Heart right ventricle (tissue), 16 donors: ENCODE measurements at regions of chr2 and their contacts with region 1.

Region 1: DNA sequence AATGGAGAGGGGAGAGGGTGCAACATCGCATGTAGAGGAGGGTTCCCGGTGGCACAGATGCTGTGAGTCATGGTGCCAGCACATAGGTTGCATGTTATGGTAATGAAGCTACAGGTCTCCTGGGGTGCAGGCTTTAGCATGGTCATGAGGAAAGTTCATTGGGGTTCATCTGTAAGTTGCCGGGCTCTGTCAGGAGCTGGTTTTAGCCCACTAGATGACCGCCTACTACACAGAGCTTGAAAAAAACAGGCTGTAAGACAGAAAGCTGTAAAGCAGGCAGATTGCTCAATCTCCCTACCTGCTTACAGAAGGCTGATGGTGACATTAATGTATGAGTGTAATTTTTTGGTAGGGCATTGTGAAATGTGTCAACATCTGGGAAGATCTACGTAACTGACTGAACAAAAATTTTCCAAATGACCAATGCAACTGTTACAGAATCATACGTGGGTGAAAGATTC is 23.9 kb downstream of the DYSF start:
- DNase-seq: no peak
- ATAC-seq: no peak
- H3K4me3 ChIP-seq: no peak overlapping the region
- H3K27ac ChIP-seq: peak overlapping the region in 4 of 10 donors; percentile 10 to 86 (median 67)
- H3K4me1 ChIP-seq: peaks cover 3 to 58% (median 52%) of the 10 kb centered on the region in 9 donors
- H3K27me3 ChIP-seq: no peaks in the 10 kb centered on the region
- CTCF ChIP-seq: no peak

Region 2: GRCh38 chr2:71494523-71495155 is 17.4 kb after region 1 on chr2:
- intact Hi-C with region 1: loop called in 2 of 10 experiments (anchors 1 to 2 kb)
- DNase-seq: no peak
- ATAC-seq: no peak
- H3K4me3 ChIP-seq: no peak overlapping the region
- H3K27ac ChIP-seq: peak overlapping the region in 1 of 10 donors; percentile 20
- H3K4me1 ChIP-seq: peaks cover 9 to 46% (median 38%) of the 10 kb centered on the region in 9 donors
- H3K27me3 ChIP-seq: no peaks in the 10 kb centered on the region
- CTCF ChIP-seq: no peak

Region 3: DNA sequence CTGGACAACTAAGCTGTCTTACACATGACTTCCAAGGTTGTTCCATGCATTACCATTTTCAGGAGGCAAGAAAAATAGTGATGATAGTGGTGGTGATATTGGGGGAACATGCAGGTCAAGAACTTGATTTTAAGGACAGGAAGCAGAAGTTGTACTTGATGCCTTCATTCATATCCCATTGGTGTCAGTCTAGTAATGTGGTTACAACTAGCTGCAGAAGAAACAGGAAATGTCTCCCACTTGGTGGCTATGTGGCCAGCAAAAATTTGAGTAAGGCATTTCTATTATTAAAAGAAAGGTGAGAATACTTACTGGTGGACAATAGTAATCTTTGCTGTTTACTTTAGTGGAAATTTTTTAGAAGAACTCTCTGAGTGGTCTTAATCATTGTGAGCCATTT is 2011.8 kb after region 1 on chr2:
- intact Hi-C with region 1: loop called in 1 of 10 experiments (anchors 10 kb)
- DNase-seq: no peak
- ATAC-seq: no peak
- H3K4me3 ChIP-seq: no peak overlapping the region
- H3K27ac ChIP-seq: no peak overlapping the region
- H3K4me1 ChIP-seq: no peaks in the 10 kb centered on the region
- H3K27me3 ChIP-seq: no peaks in the 10 kb centered on the region
- CTCF ChIP-seq: no peak